ENCODE measurements at regions of chr14 and their contacts with region 1.

Region 1: DNA sequence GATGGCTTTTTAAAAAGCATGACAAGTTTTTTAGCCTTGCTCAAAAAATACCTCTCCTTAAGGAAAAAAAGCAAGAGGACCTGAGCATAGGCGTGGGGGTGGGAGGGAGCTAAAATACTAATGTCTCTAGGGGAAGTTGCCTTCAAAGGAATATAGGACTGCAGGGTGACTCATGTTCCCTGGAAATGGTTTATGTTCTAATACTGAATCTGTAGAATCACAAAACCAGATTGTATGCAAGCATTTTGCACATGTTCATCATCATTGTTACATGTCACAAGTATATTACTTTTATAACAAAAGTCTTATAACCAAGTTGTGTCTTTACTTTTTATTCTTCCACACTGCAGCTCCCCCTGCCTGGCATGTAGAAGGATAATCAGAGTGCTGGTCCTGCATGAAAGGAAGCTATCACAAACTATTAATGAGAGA is 36.6 kb downstream of the GPR135 start:
- DNase-seq: peak; percentile 75
- H3K4me3 ChIP-seq: no peak overlapping the region
- H3K27ac ChIP-seq: peak overlapping the region; percentile 31
- H3K4me1 ChIP-seq: peaks cover 20% of the 10 kb centered on the region
- H3K27me3 ChIP-seq: no peaks in the 10 kb centered on the region

Region 2: GRCh38 chr14:58488550-58488949 is 940.0 kb before region 1 on chr14:
- in situ Hi-C with region 1: loop called (anchors 25 kb)
- DNase-seq: peak; percentile 26
- H3K4me3 ChIP-seq: no peak overlapping the region
- H3K27ac ChIP-seq: no peak overlapping the region
- H3K4me1 ChIP-seq: 0 out of 2 replicates have a peak, but pooled peaks cover 4% of the 10 kb centered on the region
- H3K27me3 ChIP-seq: no peaks in the 10 kb centered on the region

Region 3: DNA sequence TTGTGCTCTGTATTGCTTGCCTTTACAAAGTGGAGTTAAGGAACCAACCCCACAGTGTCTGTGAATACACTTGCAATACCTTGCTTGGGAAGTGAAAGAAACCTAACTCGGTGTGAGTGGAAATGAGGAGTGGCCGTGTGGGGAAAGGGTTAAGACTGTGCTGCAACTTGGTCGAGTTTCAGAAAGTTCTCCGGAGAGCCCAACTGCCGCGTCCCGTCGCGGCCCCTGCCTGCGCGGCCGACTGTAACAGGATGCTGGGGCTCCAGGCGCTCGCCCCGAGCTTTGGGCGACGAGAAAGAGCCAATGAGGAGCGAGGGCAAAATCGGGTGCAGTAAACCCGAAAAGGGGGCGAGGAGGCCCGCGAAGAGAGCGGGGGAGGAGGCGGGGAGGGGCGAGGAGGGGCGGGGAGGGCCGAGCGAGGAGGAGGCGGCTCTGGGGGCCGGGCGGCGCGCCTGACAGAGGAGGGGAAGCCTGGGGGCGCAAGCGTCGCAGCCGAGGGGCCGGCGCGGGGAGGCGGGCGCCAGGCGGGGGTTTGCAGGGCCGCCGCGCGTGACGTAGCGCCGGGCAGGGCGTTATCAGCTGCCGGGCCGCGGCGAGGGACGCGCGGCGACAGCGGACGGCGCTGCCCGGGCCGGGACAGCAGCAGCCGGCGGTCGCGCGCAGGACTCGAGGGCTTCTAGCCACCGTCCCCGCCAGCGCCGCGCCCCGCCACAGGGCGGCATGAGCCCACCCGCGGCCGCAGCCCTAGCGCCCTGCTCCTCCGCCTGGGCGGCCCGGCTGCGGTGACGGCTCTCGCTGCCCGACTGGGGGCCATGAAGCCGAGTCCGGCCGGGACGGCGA is 791.0 kb before region 1 on chr14 and contains the start of gene DACT1:
- in situ Hi-C with region 1: loop called (anchors 25 kb)
- DNase-seq: peak; percentile 86
- H3K4me3 ChIP-seq: peak within 1 kb of the TSS; percentile 93
- H3K27ac ChIP-seq: peak within 1 kb of the TSS; percentile 88
- H3K4me1 ChIP-seq: peaks cover 34% of the 10 kb centered on the region
- H3K27me3 ChIP-seq: no peaks in the 10 kb centered on the region
- total RNA-seq, gene DACT1: 21.2 and 26.9 TPM in 2 replicates

Measured in GM23248 (cell line).